ENCODE measurements at regions of chr1 and their contacts with region 1.

Region 1: DNA sequence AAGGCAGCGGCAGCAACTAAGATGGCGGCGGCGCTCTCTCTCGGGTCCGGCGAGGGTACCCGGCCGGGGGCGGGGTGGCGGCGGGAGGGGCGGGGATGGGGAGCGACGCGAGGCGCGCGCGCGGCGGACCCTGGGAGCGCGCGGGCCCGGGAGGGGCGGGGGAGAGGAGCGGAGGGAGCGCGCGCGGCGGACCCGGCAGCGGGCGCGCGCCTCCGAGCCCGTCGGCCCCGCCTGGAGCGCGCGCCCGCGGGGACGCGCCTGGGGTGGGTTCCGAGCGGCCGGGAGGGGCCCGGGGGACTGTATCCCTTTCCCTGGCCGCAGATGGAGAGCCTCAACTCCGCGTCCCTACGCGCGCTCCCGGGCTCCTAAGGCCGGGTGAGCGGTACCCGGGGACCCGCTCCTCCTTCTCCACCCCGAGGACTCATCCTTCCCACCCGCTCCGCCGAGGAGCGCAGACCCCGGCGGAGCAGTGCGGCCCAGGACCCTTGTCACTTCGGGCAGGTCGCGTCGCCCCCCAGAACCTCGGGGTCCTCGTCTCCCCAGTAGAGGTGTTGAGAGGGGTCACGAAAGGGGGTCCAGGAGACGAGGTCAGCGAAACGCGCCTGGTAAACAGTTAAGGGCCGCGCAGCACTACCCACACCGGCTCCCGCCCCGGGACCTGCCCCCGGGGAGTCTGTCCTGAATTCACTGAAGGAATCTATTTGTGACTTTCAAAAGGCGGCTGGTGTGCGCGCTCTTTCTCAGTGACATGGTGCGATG is at the start of gene CLSTN1:
- DNase-seq: peak; percentile 70 to 80
- ATAC-seq: peak; percentile 61 to 69
- H3K4me3 ChIP-seq: peak within 1 kb of the TSS; percentile 83 to 89 (median 86)
- H3K27ac ChIP-seq: peak within 1 kb of the TSS; percentile 94 to 99 (median 94)
- H3K4me1 ChIP-seq: peaks cover 32 to 38% of the 10 kb centered on the region in 2 donors
- H3K27me3 ChIP-seq: no peaks in the 10 kb centered on the region
- CTCF ChIP-seq: no peak
- POLR2A ChIP-seq: peak; percentile 60 to 86
- total RNA-seq, gene CLSTN1: 8.5 to 25.7 (median 22.0) TPM

Region 2: DNA sequence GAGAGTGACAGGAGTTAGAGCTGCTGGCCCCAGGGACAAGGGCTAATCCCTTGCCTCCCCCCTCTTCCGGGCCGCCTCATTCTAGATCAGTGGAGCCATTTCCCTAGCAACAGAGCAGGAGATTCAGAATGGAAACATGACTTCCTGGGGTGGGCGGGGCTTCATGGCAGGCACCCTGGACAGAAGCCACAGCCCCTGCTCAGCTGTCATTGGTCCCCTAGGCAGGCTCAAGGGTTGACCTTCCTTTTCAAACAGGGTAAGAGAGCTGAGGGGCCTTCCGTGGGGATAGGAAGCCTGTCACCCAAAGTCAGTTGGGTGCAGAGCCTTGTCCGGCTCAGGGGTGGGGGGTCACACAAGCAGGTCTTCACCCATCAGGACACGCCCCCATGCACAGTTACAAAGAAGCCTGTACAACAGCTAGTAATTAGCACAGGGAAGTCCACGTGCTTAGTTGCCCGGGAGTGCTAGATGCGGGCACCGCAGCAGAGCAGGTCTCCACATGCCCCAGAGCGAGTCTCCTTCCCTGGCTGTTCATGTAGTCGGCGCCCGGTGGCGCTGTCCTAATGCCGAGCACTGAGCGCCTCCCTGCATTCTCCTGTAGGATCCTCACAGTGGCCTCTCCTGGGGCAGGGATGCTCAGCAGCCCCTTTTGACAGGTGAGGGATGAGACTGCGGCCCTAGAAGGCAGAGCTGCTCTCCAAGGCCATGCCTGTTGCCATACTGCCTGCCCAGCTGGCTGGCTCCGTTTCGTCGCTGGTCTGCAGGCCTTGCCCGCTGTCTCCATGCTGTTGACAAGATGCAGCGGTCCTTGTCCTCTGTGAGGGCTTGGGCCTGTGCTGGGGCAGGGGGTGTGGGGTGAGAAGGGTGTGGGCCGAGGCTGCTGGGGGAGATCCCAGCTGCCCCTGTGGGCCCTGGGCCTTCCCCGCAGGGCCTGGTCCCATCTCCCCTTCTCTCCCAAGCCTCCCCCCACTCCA is 230.3 kb before region 1 on chr1:
- in situ Hi-C with region 1: no loop called
- intact Hi-C with region 1: loop called (anchors 10 kb)
- DNase-seq: peak in 1 of 2 donors; percentile 56
- ATAC-seq: no peak
- H3K4me3 ChIP-seq: peak overlapping the region in 3 of 4 donors; percentile 2 to 19 (median 13)
- H3K27ac ChIP-seq: peak overlapping the region; percentile 77 to 84 (median 82)
- H3K4me1 ChIP-seq: peaks cover 73 to 76% of the 10 kb centered on the region in 2 donors
- H3K27me3 ChIP-seq: no peaks in the 10 kb centered on the region
- CTCF ChIP-seq: no peak
- POLR2A ChIP-seq: no peak

Region 3: DNA sequence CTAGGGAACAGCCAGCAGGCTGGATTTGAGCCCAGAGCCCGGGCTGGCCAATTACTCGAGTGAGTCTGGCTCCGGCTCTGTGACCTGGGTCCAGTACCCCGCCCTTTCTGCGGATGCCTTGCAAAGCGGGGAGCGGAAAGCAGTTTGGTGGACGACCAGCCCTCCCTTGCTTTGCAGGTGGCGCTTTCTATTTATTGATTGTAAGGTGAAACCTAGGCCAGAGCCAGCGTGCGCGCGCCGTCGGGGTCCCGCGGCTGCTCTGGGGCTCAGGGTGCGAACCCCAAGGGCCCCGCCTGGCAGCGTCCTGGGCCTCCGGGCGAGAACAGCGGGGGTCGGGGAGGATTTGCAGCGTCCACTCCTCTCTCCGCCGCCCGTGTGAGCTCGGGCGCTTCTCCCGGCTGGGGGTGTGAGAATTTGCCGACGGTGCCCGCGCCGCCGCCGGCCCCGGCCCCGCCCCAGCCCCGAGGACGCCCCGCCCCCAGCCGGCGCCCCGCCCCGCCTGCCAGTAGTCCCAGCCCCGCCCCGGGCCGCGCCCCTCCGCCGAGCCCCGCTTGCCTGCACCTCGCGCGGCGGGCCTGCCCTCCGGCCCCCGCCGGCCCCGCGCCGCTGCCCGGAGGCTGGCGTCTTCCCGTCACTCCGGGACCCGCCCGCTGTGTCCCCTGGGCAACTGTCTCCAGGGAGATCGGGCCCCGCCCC is 135.0 kb before region 1 on chr1:
- in situ Hi-C with region 1: no loop called
- intact Hi-C with region 1: loop called (anchors 1 kb)
- DNase-seq: peak; percentile 46 to 49
- ATAC-seq: peak; percentile 80 to 84
- H3K4me3 ChIP-seq: peak overlapping the region; percentile 46 to 89 (median 65)
- H3K27ac ChIP-seq: no peak overlapping the region
- H3K4me1 ChIP-seq: peaks cover 18 to 20% of the 10 kb centered on the region in 2 donors
- H3K27me3 ChIP-seq: peaks cover 21 to 24% (median 21%) of the 10 kb centered on the region in 3 donors
- CTCF ChIP-seq: no peak
- POLR2A ChIP-seq: no peak

Region 4: DNA sequence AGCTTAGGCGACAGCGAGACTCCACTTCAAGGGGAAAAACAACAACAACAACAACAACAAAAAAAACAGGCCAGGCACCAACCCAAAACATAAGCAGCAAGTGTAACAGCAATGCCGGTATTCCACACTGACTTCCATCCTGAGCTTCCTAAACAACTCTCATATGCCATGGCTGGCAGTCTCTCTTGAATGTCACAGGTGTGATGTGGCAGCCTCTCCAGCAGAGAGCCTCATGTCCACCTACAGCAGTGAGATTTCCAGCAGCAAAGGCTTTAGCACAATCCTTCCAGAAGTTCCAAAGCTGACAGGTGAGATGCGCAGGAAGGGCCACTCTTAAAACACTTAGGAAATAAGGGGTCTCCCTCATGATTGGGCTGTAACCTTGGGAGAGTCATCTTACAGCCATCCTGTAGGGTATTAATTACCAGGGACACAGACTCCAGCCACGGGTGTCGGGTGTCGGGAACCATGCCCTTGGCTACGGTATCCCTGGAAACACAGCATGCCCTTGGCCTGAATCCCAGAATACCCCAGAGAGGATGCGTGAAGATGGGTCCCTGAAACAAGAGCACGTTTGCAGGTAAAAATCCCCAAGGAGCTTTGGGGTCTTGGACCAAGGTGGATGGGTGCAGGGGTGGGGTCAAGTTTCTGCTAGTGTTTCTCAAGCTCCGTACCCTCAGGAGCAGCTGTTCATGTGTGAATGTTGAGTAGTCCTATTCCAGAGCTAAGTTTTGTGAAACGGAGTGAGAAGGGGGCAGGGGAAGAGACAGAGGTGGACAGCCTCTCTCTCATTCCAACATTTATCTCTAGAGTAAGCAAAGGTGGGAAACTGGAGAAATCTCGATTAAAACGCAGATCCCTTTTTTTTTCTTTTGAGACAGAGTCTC is 31.7 kb before region 1 on chr1:
- in situ Hi-C with region 1: no loop called
- intact Hi-C with region 1: loop called (anchors 1 kb)
- DNase-seq: peak; percentile 45 to 74
- ATAC-seq: peak; percentile 93 to 96
- H3K4me3 ChIP-seq: peak overlapping the region in 2 of 4 donors; percentile 10 to 31
- H3K27ac ChIP-seq: peak overlapping the region; percentile 61 to 79 (median 72)
- H3K4me1 ChIP-seq: peaks cover 31 to 38% of the 10 kb centered on the region in 2 donors
- H3K27me3 ChIP-seq: no peaks in the 10 kb centered on the region
- CTCF ChIP-seq: peak in 2 of 5 experiments; percentile 13 to 21
- POLR2A ChIP-seq: no peak

Region 5: DNA sequence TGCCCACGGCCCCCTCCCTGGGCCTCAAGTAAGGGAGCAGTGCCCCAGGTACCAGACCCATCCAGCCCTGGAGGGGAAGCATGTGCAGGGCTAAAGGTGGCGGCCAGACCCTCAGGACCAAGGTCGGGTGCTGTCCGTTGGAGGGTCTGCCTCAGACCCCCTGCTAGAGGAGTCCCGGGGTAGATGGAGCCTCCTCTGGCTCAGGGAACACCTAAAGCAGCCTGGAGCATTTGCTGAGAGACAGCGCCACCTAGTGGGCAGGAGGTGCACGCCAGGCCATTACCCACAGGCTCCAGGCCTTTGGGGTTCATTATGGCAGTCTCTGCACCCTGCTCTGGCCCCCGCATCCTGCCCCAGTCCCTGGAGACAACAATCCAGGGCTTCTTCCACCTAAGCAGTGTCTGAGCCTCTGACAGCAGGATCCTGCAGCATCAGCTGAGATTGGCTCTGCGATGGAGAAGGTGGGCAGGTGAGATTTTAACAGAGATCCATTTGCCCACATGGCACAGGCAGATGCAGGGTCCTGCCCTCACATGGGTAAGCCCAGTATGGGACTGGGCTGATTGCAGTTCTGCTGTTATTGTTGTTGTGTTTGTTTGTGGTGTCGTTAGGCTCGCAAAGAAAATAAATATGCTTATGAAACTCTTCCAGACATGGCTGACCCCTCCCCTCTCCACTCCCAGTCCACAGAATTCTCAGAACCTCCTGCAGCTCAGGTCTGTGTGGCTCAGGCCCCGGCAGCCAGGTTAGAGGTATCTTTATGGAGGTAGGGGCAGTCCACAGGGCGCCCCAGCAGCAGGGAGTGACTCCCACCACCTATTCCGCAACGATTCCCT is 43.5 kb after region 1 on chr1:
- in situ Hi-C with region 1: no loop called
- intact Hi-C with region 1: loop called (anchors 2 kb)
- DNase-seq: peak; percentile 36 to 76
- ATAC-seq: peak; percentile 71 to 85
- H3K4me3 ChIP-seq: no peak overlapping the region
- H3K27ac ChIP-seq: no peak overlapping the region
- H3K4me1 ChIP-seq: peaks cover 9 to 16% of the 10 kb centered on the region in 2 donors
- H3K27me3 ChIP-seq: no peaks in the 10 kb centered on the region
- CTCF ChIP-seq: peak; percentile 89 to 99 (median 98)
- POLR2A ChIP-seq: no peak

Region 6: DNA sequence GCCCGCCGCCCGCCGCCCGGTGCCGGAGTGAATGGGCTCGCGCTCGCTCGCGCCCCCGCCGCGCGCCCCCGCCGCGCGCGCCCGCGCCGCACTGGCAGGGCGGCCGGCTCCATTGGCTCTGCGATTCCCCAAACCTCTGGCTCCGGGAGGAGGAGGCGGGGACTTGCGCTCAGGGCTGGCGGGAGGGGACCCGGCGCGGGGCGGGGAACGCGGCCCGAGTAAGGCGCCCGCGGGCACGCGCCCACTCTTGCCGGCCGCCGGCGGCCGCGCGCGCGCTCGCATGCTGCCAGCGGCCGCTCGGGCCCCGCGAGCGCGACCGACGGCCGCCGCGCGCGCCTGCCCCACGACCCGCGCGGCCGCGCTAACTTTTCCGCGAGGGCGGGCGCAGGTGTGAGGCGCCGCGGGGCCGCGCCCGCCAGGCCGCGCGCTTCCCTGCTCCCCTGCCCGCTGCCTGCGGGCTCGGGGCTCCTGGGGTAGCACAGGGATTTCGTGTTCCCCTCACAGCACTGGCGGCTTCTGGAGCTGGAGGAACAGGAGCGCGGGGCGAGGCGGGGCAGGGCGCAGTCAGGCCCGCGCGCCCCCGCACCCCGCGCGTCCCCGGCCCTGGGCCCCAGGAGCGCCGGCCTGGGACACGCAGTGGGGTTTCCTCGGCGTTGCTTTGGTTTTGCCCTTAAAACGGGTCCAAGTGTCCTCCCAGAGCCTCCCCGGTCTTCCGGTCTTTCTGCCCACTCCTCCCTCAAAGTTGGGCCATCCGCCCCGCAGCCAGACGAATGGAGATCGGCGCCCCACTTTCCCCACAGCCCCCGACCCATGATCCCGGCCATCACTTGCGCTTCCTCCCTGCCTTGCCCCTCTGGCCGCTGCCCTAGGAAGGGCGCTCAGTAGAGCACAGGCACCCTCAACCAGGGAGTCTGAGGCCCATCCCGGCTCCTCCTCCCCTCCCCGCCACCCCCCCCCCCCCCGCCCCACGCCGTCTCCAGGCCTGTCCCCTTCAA is 870.8 kb after region 1 on chr1:
- in situ Hi-C with region 1: no loop called
- intact Hi-C with region 1: loop called (anchors 2 kb)
- DNase-seq: peak; percentile 85 to 90
- ATAC-seq: peak; percentile 75 to 76
- H3K4me3 ChIP-seq: peak overlapping the region; percentile 43 to 72 (median 54)
- H3K27ac ChIP-seq: peak overlapping the region; percentile 82 to 90 (median 86)
- H3K4me1 ChIP-seq: peaks cover 45 to 62% of the 10 kb centered on the region in 2 donors
- H3K27me3 ChIP-seq: no peaks in the 10 kb centered on the region
- CTCF ChIP-seq: no peak
- POLR2A ChIP-seq: peak; percentile 11 to 36

Measured in gastrocnemius medialis (tissue), 4 donors.